ENCODE measurements at regions of chr14 and their contacts with region 1.

Region 1: GRCh38 chr14:73825551-73826188 is 26.0 kb upstream of the PTGR2 start:
- DNase-seq: peak; percentile 81
- ATAC-seq: peak; percentile 99
- H3K4me3 ChIP-seq: no peak overlapping the region
- H3K4me3 Mint-ChIP-seq: no peak overlapping the region
- H3K27ac ChIP-seq: no peak overlapping the region
- H3K27ac Mint-ChIP-seq: no peak overlapping the region
- H3K4me1 ChIP-seq: no peaks in the 10 kb centered on the region
- H3K4me1 Mint-ChIP-seq: peaks cover 4% of the 10 kb centered on the region
- H3K27me3 ChIP-seq: no peaks in the 10 kb centered on the region
- H3K27me3 Mint-ChIP-seq: no peaks in the 10 kb centered on the region
- CTCF ChIP-seq: peak; percentile 93

Region 2: DNA sequence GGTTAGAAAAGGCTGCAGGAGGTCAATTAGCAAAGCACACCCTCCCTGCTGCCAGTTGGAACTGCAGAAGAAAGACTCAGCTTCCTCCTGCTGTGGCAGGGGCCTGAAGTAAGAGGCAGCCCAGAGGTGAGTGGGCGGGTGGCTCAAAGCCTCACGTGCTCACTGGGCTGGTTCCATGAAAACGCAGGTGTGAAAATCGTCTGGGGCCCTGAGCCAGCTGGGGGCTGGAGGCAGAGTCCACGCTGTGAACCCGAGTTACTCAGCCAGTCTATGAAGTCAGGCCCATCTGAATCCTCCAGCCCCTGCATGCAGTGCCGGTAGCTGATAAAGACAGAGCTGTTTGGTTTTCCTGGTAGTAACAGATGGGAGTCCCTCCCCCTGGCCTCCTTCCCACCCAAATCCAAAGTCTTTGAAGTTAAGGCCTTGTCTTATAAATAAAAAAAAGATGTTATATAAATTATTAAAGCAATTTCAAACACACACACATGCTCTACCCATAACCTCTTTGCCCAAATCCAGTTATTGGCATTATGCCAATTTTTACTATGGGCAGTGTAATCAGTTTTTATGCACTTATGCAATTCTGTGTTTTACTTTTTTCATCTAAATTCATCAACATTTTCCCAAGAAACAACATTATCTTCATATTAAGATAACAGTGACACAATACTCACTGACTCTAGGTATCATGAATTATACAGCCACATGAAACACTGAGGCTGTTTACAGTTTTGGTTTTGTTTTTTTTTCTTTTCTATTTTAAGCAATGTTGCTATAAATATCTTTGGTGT is 53.6 kb before region 1 on chr14:
- CTCF ChIA-PET with region 1: interaction called, 9 read pairs
- POLR2A ChIA-PET with region 1: no interaction called
- intact Hi-C with region 1: loop called (anchors 1 kb)
- DNase-seq: peak; percentile 89
- ATAC-seq: peak; percentile 61
- H3K4me3 ChIP-seq: peak overlapping the region in 3 of 5 experiments; percentile 5 to 52 (median 10)
- H3K4me3 Mint-ChIP-seq: peak overlapping the region; percentile 87
- H3K27ac ChIP-seq: peak overlapping the region; percentile 96 to 97
- H3K27ac Mint-ChIP-seq: peak overlapping the region; percentile 99
- H3K4me1 ChIP-seq: peaks cover 83 to 96% of the 10 kb centered on the region in 2 donors
- H3K4me1 Mint-ChIP-seq: peaks cover 76% of the 10 kb centered on the region
- H3K27me3 ChIP-seq: no peaks in the 10 kb centered on the region
- H3K27me3 Mint-ChIP-seq: no peaks in the 10 kb centered on the region
- CTCF ChIP-seq: no peak

Measured in B cell (primary cell).